Dendritic cell treated with granulocyte-macrophage colony-stimulating factor and Interleukin-4, amounts not matched to agents 40 ng/mL and 50 ng/mL, for 4 days (primary cell): ENCODE measurements at regions of chr3 and their contacts with region 1.

Region 1: DNA sequence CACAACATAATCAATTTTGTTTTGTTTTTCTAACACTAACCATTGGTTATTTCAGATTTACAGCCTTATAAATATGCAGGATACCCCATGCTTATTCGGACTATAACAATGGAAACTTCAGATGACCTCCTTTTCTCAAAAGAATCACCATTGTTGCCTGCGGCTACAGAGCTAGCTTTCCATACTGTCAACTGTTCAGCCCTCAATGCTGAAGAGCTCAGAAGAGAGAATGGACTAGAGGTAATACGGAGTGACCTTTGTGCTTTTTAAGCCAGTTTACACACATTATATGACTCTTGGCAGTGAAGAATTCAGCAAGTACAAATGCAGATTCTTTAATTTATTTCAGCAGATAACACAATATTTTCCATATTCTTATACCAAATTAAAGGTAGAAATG is 81.8 kb downstream of the DNAJC13 start:
- H3K4me3 Mint-ChIP-seq: no peak overlapping the region
- H3K27ac Mint-ChIP-seq: no peak overlapping the region
- H3K4me1 Mint-ChIP-seq: no peaks in the 10 kb centered on the region
- H3K27me3 Mint-ChIP-seq: no peaks in the 10 kb centered on the region

Region 2: DNA sequence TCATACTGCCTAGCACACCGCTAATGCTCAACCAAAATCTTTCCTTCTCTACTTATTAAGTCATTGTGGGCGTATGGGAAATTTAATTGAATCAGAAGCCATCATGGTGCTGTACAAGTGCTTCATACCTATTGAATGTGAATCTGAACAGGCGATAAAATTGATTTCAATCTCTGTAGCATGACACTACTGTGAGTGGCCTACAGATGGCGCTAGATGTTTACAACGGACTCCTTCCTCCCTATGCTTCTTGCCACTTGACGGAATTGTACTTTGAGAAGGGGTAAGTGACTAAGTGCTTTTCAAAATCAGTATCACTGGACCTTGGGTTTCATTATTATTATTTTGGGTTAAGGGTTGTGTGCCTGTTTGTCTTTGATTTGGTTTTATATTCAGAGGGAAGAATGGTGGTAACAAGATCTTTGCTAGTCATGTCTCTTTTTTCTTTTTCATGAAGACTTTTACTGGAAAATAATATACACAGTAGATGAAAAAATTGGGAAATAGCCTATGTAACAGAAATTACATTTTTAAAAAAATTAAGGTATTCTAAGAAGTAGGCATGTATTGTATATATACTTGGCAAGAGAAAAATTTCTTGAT is 146.4 kb before region 1 on chr3:
- intact Hi-C with region 1: loop called (anchors 10 kb)
- H3K4me3 Mint-ChIP-seq: no peak overlapping the region
- H3K27ac Mint-ChIP-seq: no peak overlapping the region
- H3K4me1 Mint-ChIP-seq: no peaks in the 10 kb centered on the region
- H3K27me3 Mint-ChIP-seq: no peaks in the 10 kb centered on the region

Region 3: GRCh38 chr3:132695422-132695821 is 196.4 kb after region 1 on chr3:
- intact Hi-C with region 1: loop called (anchors 10 kb)
- H3K4me3 Mint-ChIP-seq: no peak overlapping the region
- H3K27ac Mint-ChIP-seq: no peak overlapping the region
- H3K4me1 Mint-ChIP-seq: no peaks in the 10 kb centered on the region
- H3K27me3 Mint-ChIP-seq: no peaks in the 10 kb centered on the region

Region 4: GRCh38 chr3:133578548-133579191 is 1079.6 kb after region 1 on chr3:
- intact Hi-C with region 1: no loop called
- H3K4me3 Mint-ChIP-seq: no peak overlapping the region
- H3K27ac Mint-ChIP-seq: no peak overlapping the region
- H3K4me1 Mint-ChIP-seq: peaks cover 35% of the 10 kb centered on the region
- H3K27me3 Mint-ChIP-seq: no peaks in the 10 kb centered on the region

Region 5: GRCh38 chr3:133620066-133620784 is 1121.2 kb after region 1 on chr3:
- intact Hi-C with region 1: loop called (anchors 10 kb)
- H3K4me3 Mint-ChIP-seq: no peak overlapping the region
- H3K27ac Mint-ChIP-seq: no peak overlapping the region
- H3K4me1 Mint-ChIP-seq: no peaks in the 10 kb centered on the region
- H3K27me3 Mint-ChIP-seq: no peaks in the 10 kb centered on the region